Colonic mucosa (tissue), 4 donors: ENCODE measurements at regions of chr1 and their contacts with region 1.

Region 1: GRCh38 chr1:15062479-15063099 is 91.0 kb upstream of the TMEM51 start:
- DNase-seq: peak; percentile 42
- H3K4me3 ChIP-seq: no peak overlapping the region
- H3K27ac ChIP-seq: no peak overlapping the region
- H3K4me1 ChIP-seq: no peaks in the 10 kb centered on the region
- H3K27me3 ChIP-seq: no peaks in the 10 kb centered on the region
- CTCF ChIP-seq: peak; percentile 35

Region 2: GRCh38 chr1:15090373-15090772 is 27.8 kb after region 1 on chr1:
- intact Hi-C with region 1: loop called (anchors 5 kb)
- DNase-seq: peak; percentile 90
- H3K4me3 ChIP-seq: no peak overlapping the region
- H3K27ac ChIP-seq: no peak overlapping the region
- H3K4me1 ChIP-seq: peaks cover 7% of the 10 kb centered on the region
- H3K27me3 ChIP-seq: no peaks in the 10 kb centered on the region
- CTCF ChIP-seq: no peak